Naive thymus-derived CD8-positive, alpha-beta T cell (primary cell): ENCODE measurements at regions of chr10 and their contacts with region 1.

Region 1: DNA sequence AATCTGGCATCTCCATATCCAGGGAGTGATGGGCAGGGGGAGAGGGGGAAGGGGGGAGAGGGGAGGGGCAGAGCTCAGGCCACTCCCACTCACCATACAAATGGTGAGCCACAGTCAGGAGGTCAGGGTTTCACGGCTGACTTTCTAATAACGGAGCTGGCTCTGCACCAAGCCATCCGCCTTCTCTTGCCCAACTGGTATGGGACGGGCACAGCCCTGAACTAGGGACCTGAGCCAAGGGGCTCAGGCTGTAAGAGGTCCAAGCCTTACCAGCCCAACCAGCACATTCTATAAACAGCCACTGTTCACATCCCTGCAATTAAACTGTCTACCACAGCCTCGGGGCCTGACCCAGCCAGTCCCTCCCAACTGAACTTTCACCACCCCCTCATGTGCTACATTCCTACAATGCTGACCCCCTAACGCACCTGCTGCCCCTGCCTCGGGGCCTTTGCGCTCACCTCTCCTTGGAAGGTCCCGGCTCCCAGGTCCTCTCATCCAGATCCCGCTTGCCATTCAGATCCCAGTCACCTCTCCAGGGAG is 32.5 kb downstream of the RGS10 start:
- DNase-seq: no peak
- ATAC-seq: no peak
- H3K4me3 Mint-ChIP-seq: peak overlapping the region in 8 of 10 donors; percentile 23 to 83 (median 60)
- H3K27ac Mint-ChIP-seq: peak overlapping the region; percentile 90 to 98 (median 95)
- H3K4me1 Mint-ChIP-seq: peaks cover 34 to 82% (median 72%) of the 10 kb centered on the region in 4 donors
- H3K27me3 Mint-ChIP-seq: no peaks in the 10 kb centered on the region

Region 2: GRCh38 chr10:119496273-119496672 is 13.7 kb before region 1 on chr10:
- POLR2A ChIA-PET with region 1: interaction called, 71 read pairs
- DNase-seq: no peak
- ATAC-seq: peak in 1 of 2 donors; percentile 19
- H3K4me3 Mint-ChIP-seq: peak overlapping the region in 7 of 10 donors; percentile 28 to 62 (median 42)
- H3K27ac Mint-ChIP-seq: peak overlapping the region; percentile 76 to 100 (median 93)
- H3K4me1 Mint-ChIP-seq: peaks cover 52 to 94% (median 89%) of the 10 kb centered on the region in 4 donors
- H3K27me3 Mint-ChIP-seq: no peaks in the 10 kb centered on the region